ENCODE measurements at regions of chr1 and their contacts with region 1.

Region 1: DNA sequence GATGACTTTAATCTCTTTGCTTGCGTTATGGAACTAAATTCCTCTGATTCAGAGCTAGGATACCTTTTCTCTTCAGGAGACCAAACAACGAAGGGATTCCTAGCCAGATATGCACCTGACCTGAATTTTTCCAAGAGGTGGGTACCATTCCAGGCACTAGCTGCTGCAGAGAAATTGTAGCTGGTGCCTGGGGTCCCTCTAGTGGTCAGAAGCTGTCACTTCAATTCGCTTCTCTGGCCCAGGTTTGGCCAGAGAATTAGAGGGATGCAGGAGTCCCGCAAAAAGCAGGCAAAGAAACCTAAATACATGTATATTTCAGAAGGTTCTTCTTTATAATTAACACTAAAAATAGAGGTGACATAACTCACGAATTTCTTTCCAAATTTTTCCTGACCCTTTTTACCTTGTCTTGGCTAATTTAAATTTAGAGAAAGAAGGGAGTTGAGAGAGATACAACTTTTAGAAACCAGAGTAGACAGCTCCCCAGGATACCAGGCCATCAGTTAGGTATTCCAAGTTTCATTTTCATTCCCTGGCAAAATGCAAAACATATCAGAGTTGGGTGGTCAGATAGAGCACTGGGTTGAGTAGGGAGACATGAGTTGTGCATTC is 9.6 kb downstream of the ACKR1 start:
- DNase-seq: peak; percentile 67
- ATAC-seq: peak; percentile 66
- H3K4me3 Mint-ChIP-seq: no peak overlapping the region
- H3K27ac Mint-ChIP-seq: no peak overlapping the region
- H3K4me1 Mint-ChIP-seq: peaks cover 31% of the 10 kb centered on the region
- H3K27me3 Mint-ChIP-seq: no peaks in the 10 kb centered on the region; the same call in 1 of the 2 replicates
- CTCF ChIP-seq: peak; percentile 87

Region 2: DNA sequence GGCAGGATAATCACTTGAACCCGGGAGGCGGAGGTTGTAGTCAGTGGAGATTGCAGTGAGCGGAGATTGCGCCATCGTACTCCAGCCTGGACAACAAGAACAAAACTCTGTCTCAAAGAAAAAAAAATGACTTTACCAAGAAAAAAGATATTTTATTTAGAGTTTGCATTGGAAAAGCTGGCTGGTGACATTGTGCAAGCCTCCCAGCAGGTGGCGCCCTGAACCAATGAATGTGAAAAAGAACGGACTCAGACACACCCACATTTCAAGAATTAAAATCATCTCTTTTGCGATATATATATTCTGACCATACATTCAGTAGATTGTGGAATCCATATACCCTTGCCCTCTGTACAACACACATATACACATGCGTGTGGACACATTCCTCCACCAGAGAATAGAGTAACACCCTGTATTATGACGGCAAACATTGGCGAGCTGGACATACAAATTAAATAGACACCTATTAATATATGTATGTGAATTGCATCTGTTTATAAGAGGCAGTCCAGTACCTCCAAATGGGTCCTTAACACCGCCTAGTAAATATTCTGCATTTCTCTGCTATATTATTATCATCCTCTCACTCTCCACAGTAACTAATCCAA is 81.9 kb before region 1 on chr1:
- CTCF ChIA-PET with region 1: interaction called, 181 read pairs
- POLR2A ChIA-PET with region 1: interaction called, 4 read pairs
- DNase-seq: peak; percentile 68
- ATAC-seq: peak; percentile 43; the same call in 1 of the 2 replicates
- H3K4me3 Mint-ChIP-seq: no peak overlapping the region
- H3K27ac Mint-ChIP-seq: no peak overlapping the region
- H3K4me1 Mint-ChIP-seq: no peaks in the 10 kb centered on the region
- H3K27me3 Mint-ChIP-seq: no peaks in the 10 kb centered on the region
- CTCF ChIP-seq: peak; percentile 67

Region 3: DNA sequence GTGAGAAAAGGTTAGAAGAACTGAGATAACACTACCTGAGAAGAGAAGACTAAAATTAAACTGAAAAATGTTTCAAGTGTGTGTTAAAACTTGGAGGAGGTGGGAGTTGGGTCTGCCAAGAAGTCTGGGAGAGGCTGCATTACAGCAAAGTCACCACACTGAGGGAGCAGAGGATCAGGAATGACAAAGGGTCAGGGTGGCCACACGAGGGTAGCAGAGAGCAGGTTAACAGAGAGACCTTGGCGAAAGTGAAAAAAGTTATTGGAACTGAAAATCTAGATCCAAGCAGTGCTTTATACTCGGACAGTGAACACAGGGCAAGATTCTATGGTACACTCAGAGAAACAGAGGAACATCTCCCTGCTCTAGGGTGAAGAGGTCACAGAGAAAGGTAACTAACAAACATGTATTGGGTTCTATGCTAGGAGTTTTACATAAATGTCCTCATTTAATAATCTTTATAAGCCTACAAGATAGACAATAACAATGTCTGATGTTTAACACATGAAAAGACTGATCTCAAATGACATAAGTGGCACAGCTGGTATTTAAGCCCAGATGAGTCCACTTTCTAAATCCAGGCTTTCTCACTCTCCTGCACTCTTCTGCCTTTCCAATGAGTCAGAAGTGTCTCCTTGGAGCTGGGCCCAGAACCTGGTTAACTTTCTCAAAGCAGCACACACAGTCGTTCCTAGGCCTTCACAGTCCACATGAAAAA is 53.1 kb before region 1 on chr1:
- CTCF ChIA-PET with region 1: interaction called, 99 read pairs
- POLR2A ChIA-PET with region 1: no interaction called
- DNase-seq: peak; percentile 76
- ATAC-seq: peak; percentile 97
- H3K4me3 Mint-ChIP-seq: no peak overlapping the region
- H3K27ac Mint-ChIP-seq: no peak overlapping the region
- H3K4me1 Mint-ChIP-seq: peaks cover 11% of the 10 kb centered on the region
- H3K27me3 Mint-ChIP-seq: peaks cover 3% of the 10 kb centered on the region; the same call in 1 of the 2 replicates
- CTCF ChIP-seq: peak; percentile 87

Region 4: DNA sequence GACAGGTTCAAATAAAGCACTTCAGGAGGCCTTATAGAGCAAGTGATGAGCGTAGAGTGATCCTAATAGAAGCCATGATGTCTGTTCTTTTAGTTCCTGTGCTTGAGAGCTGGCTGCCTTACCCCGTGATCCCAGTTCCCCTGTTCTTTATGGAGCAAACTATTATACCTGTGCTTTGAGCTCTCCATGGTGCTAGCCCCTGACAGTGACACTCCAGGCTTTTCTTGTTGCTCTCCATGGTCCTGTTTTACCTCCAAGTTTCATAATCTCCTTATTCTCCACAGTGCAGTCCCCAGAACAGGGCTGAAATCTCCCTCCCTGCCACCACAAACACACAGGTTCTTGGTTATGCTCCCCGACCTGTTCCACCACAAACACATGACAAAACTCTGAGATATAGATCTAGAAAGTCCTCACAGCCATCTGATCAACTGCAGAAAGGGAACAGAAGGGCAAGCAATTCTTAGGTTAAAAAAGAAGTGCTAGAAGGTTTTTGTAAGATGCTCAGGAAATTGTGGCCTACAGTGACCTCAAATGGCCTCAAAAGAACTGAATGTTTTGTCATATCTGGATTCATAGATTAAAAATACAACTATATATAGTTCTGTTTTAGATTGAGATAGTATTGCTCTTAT is 36.9 kb before region 1 on chr1:
- CTCF ChIA-PET with region 1: interaction called, 17 read pairs
- POLR2A ChIA-PET with region 1: interaction called, 3 read pairs
- DNase-seq: peak; percentile 73
- ATAC-seq: peak; percentile 58
- H3K4me3 Mint-ChIP-seq: no peak overlapping the region
- H3K27ac Mint-ChIP-seq: no peak overlapping the region
- H3K4me1 Mint-ChIP-seq: peaks cover 20% of the 10 kb centered on the region
- H3K27me3 Mint-ChIP-seq: peaks cover 5% of the 10 kb centered on the region
- CTCF ChIP-seq: no peak

Region 5: DNA sequence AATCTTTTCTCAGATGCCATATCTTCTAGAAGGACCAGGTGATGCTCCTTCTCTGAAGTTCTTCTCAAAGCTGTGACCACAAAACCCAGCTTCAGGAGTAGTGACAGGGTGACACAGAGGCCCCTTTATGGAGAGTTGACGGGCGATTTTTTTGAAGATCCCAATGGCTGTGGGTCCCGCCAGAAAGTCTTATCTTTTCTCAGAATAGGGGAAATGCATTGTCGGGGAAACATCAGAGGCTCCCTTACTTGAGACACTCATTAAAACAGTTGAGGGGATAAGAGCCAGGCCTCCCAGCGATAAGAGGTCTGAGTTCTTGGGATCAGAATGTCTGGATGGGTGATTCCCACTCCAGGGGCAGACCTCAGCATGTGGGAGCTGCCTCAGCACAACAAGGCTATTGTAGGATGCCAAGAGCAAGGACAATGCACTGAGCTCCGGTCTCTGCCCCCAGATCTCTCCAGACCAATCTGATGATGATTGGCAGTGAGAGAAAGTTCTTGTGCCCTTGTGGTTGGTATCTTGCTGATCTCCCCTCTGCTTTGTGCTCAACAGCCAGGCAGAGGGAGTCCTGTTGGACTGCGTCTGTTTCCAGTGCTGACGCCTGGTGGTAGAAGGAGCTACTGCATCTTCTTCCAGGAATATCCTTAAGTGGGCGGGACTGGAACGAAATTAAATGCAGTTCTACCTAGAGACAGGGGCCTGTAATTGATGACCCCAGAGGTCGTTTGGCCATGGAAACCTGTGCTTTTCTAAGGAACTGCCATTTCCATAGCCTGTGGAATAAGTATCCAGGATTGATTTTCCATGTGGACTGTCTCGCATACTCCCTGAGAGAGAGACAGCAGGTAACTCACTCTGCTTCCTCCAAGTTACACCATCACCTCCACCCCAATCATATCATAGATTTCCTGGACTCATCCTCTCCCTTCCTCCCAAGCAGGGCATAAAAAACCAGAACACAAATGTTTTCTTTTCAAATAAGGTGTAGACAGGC is 16.4 kb before region 1 on chr1:
- CTCF ChIA-PET with region 1: interaction called, 200 read pairs
- POLR2A ChIA-PET with region 1: interaction called, 4 read pairs
- DNase-seq: peak; percentile 84
- ATAC-seq: peak; percentile 89
- H3K4me3 Mint-ChIP-seq: no peak overlapping the region
- H3K27ac Mint-ChIP-seq: no peak overlapping the region
- H3K4me1 Mint-ChIP-seq: peaks cover 17% of the 10 kb centered on the region
- H3K27me3 Mint-ChIP-seq: no peaks in the 10 kb centered on the region
- CTCF ChIP-seq: peak; percentile 90

Measured in WTC11 (cell line).